Activated T-helper 2 cell treated with anti-CD3 and anti-CD28 coated beads, Interferon-gamma antibody, Interleukin-2, Interleukin-4, amounts not matched to agents 10 μg/mL and 5 μg/mL and 100 μg/mL, durations not matched to agents 14 hours and 24 hours and 36 hours (primary cell): ENCODE measurements at regions of chr3 and their contacts with region 1.

Region 1: DNA sequence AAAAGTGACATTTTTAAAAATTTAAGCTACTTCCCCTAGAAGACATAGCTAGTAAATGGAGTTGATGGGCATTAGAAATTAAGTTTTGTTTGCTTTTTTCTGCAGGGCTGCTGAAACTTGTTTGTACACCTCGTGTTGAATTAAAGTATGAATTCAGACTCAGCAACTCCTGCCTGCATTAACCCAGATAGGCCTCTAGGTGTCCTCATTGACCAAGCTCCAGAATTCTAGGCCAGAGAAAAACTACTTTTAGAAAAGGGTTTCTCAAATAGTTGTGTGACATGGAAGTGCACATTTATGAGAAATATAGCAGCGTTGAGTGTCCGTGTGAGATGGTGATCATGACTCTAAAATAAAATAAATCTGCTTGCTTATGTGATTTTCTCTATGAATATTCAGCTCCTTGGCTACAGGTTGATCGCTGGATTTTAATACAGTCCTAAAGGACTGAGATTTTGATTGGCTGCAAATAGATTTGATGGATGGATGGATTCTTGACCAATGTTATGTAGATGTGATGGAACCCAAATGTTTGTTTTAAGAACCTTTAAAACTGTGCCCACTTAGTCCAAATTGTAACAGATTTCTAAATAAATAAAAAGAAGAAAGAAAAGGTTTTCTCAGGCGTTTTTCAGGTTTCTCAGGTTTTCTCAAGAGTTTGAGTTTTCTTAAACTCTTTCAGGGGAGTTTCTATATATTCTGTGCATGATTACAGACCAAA is 39.4 kb upstream of the LMOD3 start:
- DNase-seq: peak; percentile 13
- H3K4me3 Mint-ChIP-seq: no peak overlapping the region
- H3K27ac Mint-ChIP-seq: no peak overlapping the region
- H3K4me1 Mint-ChIP-seq: peaks cover 15% of the 10 kb centered on the region
- H3K27me3 Mint-ChIP-seq: peaks cover 7% of the 10 kb centered on the region

Region 2: GRCh38 chr3:69120879-69121464 is 40.8 kb before region 1 on chr3:
- intact Hi-C with region 1: loop called (anchors 5 kb)
- DNase-seq: peak; percentile 69
- H3K4me3 Mint-ChIP-seq: no peak overlapping the region
- H3K27ac Mint-ChIP-seq: no peak overlapping the region
- H3K4me1 Mint-ChIP-seq: peaks cover 4% of the 10 kb centered on the region
- H3K27me3 Mint-ChIP-seq: peaks cover 5% of the 10 kb centered on the region

Region 3: GRCh38 chr3:69189487-69189886 is 27.7 kb after region 1 on chr3:
- intact Hi-C with region 1: no loop called
- DNase-seq: no peak
- H3K4me3 Mint-ChIP-seq: no peak overlapping the region
- H3K27ac Mint-ChIP-seq: no peak overlapping the region
- H3K4me1 Mint-ChIP-seq: peaks cover 12% of the 10 kb centered on the region
- H3K27me3 Mint-ChIP-seq: no peaks in the 10 kb centered on the region

Region 4: DNA sequence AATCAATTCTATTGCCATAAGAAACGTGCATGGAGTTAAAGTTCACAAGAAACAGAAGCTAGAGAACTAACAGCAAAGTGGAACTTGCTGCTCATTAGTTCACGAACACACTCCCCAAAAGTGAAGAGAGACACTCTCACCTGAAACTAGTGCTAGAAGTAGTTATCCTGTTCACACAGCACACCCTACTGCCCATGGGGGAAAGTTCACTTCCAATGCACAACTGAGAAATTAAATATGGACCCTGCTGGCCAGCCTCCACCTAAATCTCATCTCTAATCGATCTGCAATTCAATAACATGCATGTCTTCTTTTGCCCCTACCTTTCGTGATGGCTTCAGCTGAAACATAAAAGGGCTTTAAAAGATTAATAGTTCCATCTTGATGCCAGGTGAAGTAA is 263.5 kb after region 1 on chr3:
- intact Hi-C with region 1: loop called (anchors 2 kb)
- DNase-seq: peak; percentile 9
- H3K4me3 Mint-ChIP-seq: no peak overlapping the region
- H3K27ac Mint-ChIP-seq: no peak overlapping the region
- H3K4me1 Mint-ChIP-seq: peaks cover 7% of the 10 kb centered on the region
- H3K27me3 Mint-ChIP-seq: no peaks in the 10 kb centered on the region

Region 5: GRCh38 chr3:69671082-69671952 is 509.6 kb after region 1 on chr3:
- intact Hi-C with region 1: loop called (anchors 2 kb)
- DNase-seq: no peak
- H3K4me3 Mint-ChIP-seq: no peak overlapping the region
- H3K27ac Mint-ChIP-seq: no peak overlapping the region
- H3K4me1 Mint-ChIP-seq: no peaks in the 10 kb centered on the region
- H3K27me3 Mint-ChIP-seq: no peaks in the 10 kb centered on the region